CD4-positive, alpha-beta memory T cell (primary cell): ENCODE measurements at regions of chr2 and their contacts with region 1.

Region 1: DNA sequence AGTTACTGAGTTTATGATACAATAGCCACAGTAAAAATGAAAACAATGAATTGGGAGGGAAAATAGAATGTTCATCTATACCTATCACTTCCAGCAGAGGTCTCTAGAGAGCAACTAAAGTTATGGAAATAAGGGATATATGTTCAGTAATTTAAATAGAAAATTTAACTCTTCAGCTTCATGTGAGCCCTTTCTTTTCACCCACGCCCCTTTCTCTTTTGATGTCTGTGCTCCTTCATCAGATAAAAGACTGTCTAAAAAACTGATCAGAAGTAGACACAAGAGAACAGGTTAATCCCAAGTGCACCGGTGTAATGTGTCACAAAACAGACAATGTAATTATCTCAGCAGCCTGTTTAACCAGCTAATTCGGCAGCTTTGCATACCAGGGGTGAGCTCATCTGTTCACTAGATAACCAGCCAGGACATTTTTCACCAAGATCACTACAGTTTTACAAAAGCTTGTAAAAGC is 238.5 kb upstream of the ERBB4 start:
- DNase-seq: peak; percentile 6 to 36 (median 13)
- H3K4me3 ChIP-seq: no peak overlapping the region
- H3K4me3 Mint-ChIP-seq: no peak overlapping the region
- H3K27ac ChIP-seq: no peak overlapping the region
- H3K27ac Mint-ChIP-seq: no peak overlapping the region
- H3K4me1 ChIP-seq: no peaks in the 10 kb centered on the region
- H3K4me1 Mint-ChIP-seq: peaks cover 0 to 5% (median 0%) of the 10 kb centered on the region in 4 donors
- H3K27me3 ChIP-seq: no peaks in the 10 kb centered on the region
- H3K27me3 Mint-ChIP-seq: no peaks in the 10 kb centered on the region

Region 2: DNA sequence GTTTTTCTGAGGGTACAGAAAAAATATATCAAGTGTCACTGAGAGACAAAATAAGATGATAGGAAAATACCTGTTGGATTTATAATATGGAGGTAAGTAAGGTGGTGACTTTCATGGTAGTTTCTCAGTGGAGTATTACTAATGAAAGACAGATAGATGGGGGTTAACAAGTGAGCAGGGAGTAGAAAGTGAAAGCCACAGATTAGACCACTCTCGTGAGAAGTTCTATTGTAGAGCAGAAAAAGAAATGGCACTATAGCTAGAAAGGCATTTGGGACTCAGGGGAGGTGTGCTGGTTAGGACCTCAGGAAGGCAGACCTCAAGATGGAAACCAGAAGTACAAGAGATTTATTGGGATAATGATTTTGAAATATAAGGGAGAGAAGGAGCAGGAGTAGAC is 176.1 kb after region 1 on chr2:
- CTCF ChIA-PET with region 1: no interaction called
- POLR2A ChIA-PET with region 1: no interaction called
- intact Hi-C with region 1: no loop called
- DNase-seq: no peak
- H3K4me3 ChIP-seq: no peak overlapping the region
- H3K4me3 Mint-ChIP-seq: no peak overlapping the region
- H3K27ac ChIP-seq: no peak overlapping the region
- H3K27ac Mint-ChIP-seq: no peak overlapping the region
- H3K4me1 ChIP-seq: no peaks in the 10 kb centered on the region
- H3K4me1 Mint-ChIP-seq: peaks cover 3 to 14% (median 10%) of the 10 kb centered on the region in 4 donors
- H3K27me3 ChIP-seq: no peaks in the 10 kb centered on the region
- H3K27me3 Mint-ChIP-seq: no peaks in the 10 kb centered on the region

Region 3: GRCh38 chr2:213021971-213022899 is 245.2 kb after region 1 on chr2:
- CTCF ChIA-PET with region 1: no interaction called
- POLR2A ChIA-PET with region 1: no interaction called
- intact Hi-C with region 1: no loop called
- DNase-seq: no peak
- H3K4me3 ChIP-seq: no peak overlapping the region
- H3K4me3 Mint-ChIP-seq: no peak overlapping the region
- H3K27ac ChIP-seq: no peak overlapping the region
- H3K27ac Mint-ChIP-seq: peak overlapping the region in 4 of 7 donors; percentile 1 to 19 (median 8)
- H3K4me1 ChIP-seq: peaks cover 4% of the 10 kb centered on the region
- H3K4me1 Mint-ChIP-seq: peaks cover 1 to 9% (median 7%) of the 10 kb centered on the region in 4 donors
- H3K27me3 ChIP-seq: no peaks in the 10 kb centered on the region
- H3K27me3 Mint-ChIP-seq: no peaks in the 10 kb centered on the region

Region 4: GRCh38 chr2:213232649-213233437 is 455.8 kb after region 1 on chr2:
- CTCF ChIA-PET with region 1: no interaction called
- POLR2A ChIA-PET with region 1: no interaction called
- intact Hi-C with region 1: loop called (anchors 5 kb)
- DNase-seq: peak in 4 of 5 donors; percentile 11 to 57 (median 16)
- H3K4me3 ChIP-seq: peak overlapping the region in 1 of 2 donors; percentile 5
- H3K4me3 Mint-ChIP-seq: peak overlapping the region in 6 of 8 donors; percentile 10 to 56 (median 38)
- H3K27ac ChIP-seq: peak overlapping the region; percentile 23
- H3K27ac Mint-ChIP-seq: peak overlapping the region in 6 of 7 donors; percentile 3 to 61 (median 28)
- H3K4me1 ChIP-seq: no peaks in the 10 kb centered on the region
- H3K4me1 Mint-ChIP-seq: peaks cover 7 to 18% (median 12%) of the 10 kb centered on the region in 4 donors
- H3K27me3 ChIP-seq: no peaks in the 10 kb centered on the region
- H3K27me3 Mint-ChIP-seq: peaks cover 0 to 5% of the 10 kb centered on the region in 2 donors